Mammary epithelial cell (primary cell): ENCODE measurements at regions of chr10 and their contacts with region 1.

Region 1: DNA sequence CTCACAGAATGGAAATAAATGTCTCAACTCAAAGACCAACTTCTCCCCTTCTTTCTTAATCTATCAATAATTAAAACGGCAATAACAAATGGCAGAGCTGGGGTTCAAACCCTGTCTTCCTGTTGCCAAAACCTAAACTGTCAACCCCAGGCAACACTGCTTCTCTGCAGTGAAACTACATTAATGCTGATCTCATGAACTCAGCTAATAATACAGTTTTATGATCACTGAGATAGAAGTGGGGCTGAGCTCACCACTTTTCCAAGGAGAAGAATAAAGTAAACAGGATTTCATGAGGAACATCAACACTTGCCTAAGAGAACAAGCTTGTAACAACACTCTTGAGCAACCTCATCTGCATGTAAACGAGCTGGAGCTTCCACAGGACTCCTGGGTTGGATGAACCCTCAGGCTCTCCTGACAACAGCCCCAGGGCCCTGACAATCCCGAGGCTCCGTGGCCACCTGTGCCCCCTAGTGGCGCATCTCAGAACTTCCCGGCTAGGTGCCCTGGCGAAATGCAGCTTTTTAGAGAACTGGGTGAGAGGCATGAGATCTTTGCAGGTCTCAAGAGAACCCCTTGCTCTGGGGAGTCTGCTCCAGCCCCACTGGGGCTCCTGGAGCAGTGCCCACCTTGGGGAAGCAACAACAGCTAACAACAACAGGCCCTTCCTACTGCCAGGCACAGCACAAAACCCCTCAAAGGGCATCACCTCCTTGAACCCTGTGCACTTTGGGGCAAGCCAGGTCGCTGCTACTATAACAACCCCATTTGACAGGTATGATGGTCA is 169.3 kb downstream of the SH3PXD2A start:
- DNase-seq: no peak
- H3K4me3 ChIP-seq: no peak overlapping the region
- H3K27ac ChIP-seq: no peak overlapping the region
- H3K4me1 ChIP-seq: peaks cover 7% of the 10 kb centered on the region
- H3K27me3 ChIP-seq: no peaks in the 10 kb centered on the region
- CTCF ChIP-seq: peak; percentile 85 to 93

Region 2: DNA sequence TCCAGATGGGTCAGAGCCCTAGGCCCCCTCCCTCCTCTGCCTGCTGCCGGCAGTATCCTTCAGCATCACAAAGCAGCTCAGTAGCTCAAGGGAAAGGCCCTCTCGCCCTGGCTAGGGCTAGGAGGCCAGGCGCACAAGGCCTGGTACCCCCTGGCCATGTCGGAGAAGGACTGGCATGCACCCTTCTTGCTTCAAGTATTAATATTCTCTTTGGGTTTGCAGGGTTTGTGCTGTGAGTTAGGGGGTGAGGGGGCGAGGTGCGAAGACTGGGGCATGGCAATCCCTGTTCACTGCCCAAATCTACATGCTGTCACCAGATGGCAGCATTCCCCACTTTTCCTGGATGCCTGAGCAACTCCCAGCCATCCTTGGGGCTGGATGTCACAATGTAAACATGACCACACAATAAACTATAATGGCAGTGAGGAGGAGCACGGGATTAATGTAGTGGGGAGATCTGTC is 87.4 kb before region 1 on chr10:
- CTCF ChIA-PET with region 1: interaction called, 3 read pairs
- dilution Hi-C with region 1: no loop called
- in situ Hi-C with region 1: no loop called
- intact Hi-C with region 1: loop called (anchors 1 kb)
- DNase-seq: peak; percentile 32
- H3K4me3 ChIP-seq: no peak overlapping the region
- H3K27ac ChIP-seq: no peak overlapping the region
- H3K4me1 ChIP-seq: no peaks in the 10 kb centered on the region
- H3K27me3 ChIP-seq: no peaks in the 10 kb centered on the region
- CTCF ChIP-seq: peak; percentile 40 to 59